ENCODE measurements at regions of chr5 and their contacts with region 1.

Region 1: GRCh38 chr5:116574367-116575325 is at the start of gene SEMA6A:
- DNase-seq: peak; percentile 84 to 94 (median 91)
- H3K4me3 ChIP-seq: peak within 1 kb of the TSS; percentile 65 to 91 (median 79)
- H3K27ac ChIP-seq: peak within 1 kb of the TSS; percentile 35 to 93 (median 85)
- H3K27me3 ChIP-seq: peaks cover 0 to 14% (median 0%) of the 10 kb centered on the region in 45 donors
- CTCF ChIP-seq: peak in 41 of 56 donors; percentile 3 to 61 (median 33)
- total RNA-seq, gene SEMA6A: 32.1 to 205 (median 70.3) TPM

Region 2: GRCh38 chr5:116137544-116138378 is 436.9 kb before region 1 on chr5:
- intact Hi-C with region 1: loop called (anchors 2 to 5 kb)
- DNase-seq: peak in 1 of 10 donors; percentile 5
- H3K4me3 ChIP-seq: no peak overlapping the region
- H3K27ac ChIP-seq: peak overlapping the region in 10 of 59 donors; percentile 4 to 50 (median 28)
- H3K27me3 ChIP-seq: no peaks in the 10 kb centered on the region
- CTCF ChIP-seq: peak; percentile 67 to 93 (median 86)

Region 3: GRCh38 chr5:116361171-116361967 is 213.3 kb before region 1 on chr5:
- intact Hi-C with region 1: loop called (anchors 2 to 5 kb)
- DNase-seq: peak; percentile 68 to 84 (median 75)
- H3K4me3 ChIP-seq: peak overlapping the region; percentile 27 to 72 (median 57)
- H3K27ac ChIP-seq: peak overlapping the region in 58 of 59 donors; percentile 5 to 90 (median 79)
- H3K27me3 ChIP-seq: no peaks in the 10 kb centered on the region
- CTCF ChIP-seq: peak in 54 of 56 donors; percentile 22 to 82 (median 51)

Region 4: DNA sequence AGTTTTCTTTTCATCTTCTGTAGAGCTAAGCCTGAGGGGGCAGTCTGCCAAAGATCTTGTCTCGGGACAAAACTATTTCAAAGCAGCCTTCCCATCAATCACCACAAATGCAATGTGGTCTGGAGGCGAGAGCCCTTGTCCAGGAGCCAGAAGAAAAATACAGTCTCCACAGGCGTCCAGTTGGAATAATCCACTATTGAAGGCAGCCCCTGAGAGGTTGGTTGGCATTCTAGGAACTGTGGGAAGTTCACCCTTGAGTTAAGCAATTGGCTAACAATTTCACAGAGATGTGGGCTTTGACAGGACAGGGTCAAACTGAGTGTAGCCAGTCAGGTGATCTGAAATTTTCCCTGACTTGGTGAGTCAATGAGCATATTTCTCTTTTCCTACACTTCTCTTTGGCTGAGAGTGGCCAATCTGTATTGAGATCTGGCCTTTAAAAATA is 72.0 kb before region 1 on chr5:
- intact Hi-C with region 1: loop called in 1 of 2 experiments (anchors 5 kb)
- DNase-seq: no peak
- H3K4me3 ChIP-seq: no peak overlapping the region
- H3K27ac ChIP-seq: peak overlapping the region in 24 of 59 donors; percentile 2 to 65 (median 25)
- H3K27me3 ChIP-seq: no peaks in the 10 kb centered on the region
- CTCF ChIP-seq: no peak

Region 5: GRCh38 chr5:116622375-116623050 is 47.9 kb after region 1 on chr5:
- intact Hi-C with region 1: loop called in 1 of 2 experiments (anchors 2 kb)
- DNase-seq: peak in 5 of 10 donors; percentile 27 to 55 (median 34)
- H3K4me3 ChIP-seq: peak overlapping the region in 4 of 59 donors; percentile 5 to 24 (median 16)
- H3K27ac ChIP-seq: peak overlapping the region in 30 of 59 donors; percentile 4 to 75 (median 37)
- H3K27me3 ChIP-seq: no peaks in the 10 kb centered on the region
- CTCF ChIP-seq: peak in 45 of 56 donors; percentile 18 to 65 (median 39)

Region 6: GRCh38 chr5:116652196-116652729 is 77.6 kb after region 1 on chr5:
- intact Hi-C with region 1: loop called (anchors 2 to 10 kb)
- DNase-seq: peak; percentile 26 to 90 (median 80)
- H3K4me3 ChIP-seq: peak overlapping the region in 42 of 59 donors; percentile 2 to 51 (median 20)
- H3K27ac ChIP-seq: peak overlapping the region; percentile 5 to 97 (median 86)
- H3K27me3 ChIP-seq: no peaks in the 10 kb centered on the region
- CTCF ChIP-seq: peak in 4 of 56 donors; percentile 6 to 16 (median 14)

Region 7: DNA sequence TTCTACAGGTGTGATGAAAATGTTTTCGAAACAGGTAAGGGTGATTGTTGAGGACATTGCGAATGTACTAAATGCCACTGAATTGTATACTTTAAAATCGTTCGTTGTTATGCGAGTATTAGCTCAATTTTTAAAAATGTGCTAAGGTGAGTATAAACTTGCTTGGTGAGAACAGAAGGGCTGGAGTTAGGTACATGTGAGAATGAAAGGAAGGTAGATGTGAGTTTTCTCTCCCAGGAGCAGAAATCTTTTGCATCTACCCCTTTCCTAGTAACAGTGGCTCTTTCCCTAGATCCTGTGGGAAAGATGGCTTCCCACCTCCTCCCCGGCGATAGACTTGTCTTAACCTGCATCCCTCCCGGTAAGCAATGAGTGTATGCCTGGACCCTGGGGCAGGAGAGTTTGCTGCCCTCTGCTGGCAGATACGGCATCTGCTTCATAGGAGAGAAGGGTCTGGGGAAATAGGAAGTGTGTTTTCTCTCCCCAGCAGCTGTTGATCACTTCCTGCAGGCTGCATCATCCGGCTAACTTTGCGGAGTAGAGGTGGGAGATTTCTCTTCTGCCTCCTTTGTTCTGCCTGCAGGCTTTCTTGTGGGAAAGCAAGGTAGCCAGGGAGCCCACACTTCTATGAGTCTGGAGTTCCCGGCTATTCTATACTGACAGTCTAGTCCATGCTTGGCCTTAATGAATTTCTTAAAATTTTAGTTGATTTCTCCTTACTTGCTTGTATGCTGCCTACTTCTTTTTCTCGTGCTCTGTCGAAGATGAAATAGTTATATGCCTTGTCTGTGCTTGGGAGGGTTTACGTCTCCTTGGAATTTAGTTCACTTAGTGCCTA is 373.3 kb after region 1 on chr5:
- intact Hi-C with region 1: loop called (anchors 2 to 5 kb)
- DNase-seq: peak in 7 of 10 donors; percentile 5 to 51 (median 34)
- H3K4me3 ChIP-seq: no peak overlapping the region
- H3K27ac ChIP-seq: no peak overlapping the region
- H3K27me3 ChIP-seq: no peaks in the 10 kb centered on the region
- CTCF ChIP-seq: peak in 55 of 56 donors; percentile 19 to 74 (median 56)

Measured in dorsolateral prefrontal cortex (tissue), 120 donors.